MCF 10A (cell line): ENCODE measurements at regions of chr3 and their contacts with region 1.

Region 1: GRCh38 chr3:71652781-71653413 is 69.4 kb upstream of the FOXP1 start:
- DNase-seq: peak; percentile 34
- H3K4me3 Mint-ChIP-seq: no peak overlapping the region
- H3K27ac Mint-ChIP-seq: no peak overlapping the region
- H3K4me1 Mint-ChIP-seq: peaks cover 11% of the 10 kb centered on the region
- H3K27me3 Mint-ChIP-seq: no peaks in the 10 kb centered on the region
- CTCF ChIP-seq: peak; percentile 66

Region 2: DNA sequence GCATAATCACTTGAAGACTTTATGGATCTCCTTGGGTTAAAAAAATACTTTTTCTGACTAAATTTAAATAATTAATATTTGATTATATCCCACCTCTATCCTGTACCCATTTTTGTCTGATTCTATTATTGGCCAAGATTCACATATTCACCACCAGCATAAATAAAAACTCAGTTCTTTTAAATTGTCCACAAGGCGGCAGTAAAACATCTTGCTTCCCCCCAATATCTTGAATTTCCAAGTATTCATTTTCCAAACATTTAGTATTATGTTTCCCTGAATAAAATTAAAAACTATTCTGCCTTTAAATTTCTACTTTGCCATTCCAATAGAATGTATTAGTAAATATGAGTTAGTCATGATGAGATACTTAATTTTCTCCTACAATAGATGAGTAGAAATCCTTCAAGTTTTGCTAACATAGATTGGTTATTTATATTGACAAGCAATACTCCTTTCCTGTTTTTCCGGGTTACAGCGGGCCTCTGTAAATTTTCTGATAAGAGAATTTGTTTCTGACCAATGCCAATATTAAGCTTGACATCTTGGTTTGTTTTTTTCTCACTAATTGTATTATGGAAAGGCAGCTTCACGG is 1121.7 kb before region 1 on chr3:
- CTCF ChIA-PET with region 1: interaction called, 7 read pairs
- POLR2A ChIA-PET with region 1: no interaction called
- intact Hi-C with region 1: loop called (anchors 1 kb)
- DNase-seq: peak; percentile 38
- H3K4me3 Mint-ChIP-seq: no peak overlapping the region
- H3K27ac Mint-ChIP-seq: no peak overlapping the region
- H3K4me1 Mint-ChIP-seq: no peaks in the 10 kb centered on the region
- H3K27me3 Mint-ChIP-seq: peaks cover 98% of the 10 kb centered on the region
- CTCF ChIP-seq: peak; percentile 40

Region 3: DNA sequence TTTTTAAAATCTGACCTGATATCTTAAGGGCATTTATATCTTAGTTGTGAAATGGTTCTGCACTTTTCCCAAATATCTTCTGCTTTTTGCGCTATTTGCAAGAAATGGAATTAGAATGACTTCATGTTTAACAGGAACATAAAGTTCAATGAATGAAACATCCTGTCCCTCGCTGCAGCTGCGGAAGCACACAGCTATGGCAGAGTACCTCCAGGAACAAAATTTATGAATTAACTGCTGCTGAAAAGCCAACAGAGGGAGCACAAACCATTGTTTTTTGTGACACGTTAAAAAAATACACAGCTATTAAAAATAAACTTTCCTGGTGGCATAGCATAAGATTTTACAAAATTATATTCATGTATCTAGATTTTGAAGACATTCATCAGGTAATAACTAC is 936.1 kb before region 1 on chr3:
- CTCF ChIA-PET with region 1: interaction called, 5 read pairs
- POLR2A ChIA-PET with region 1: no interaction called
- intact Hi-C with region 1: loop called (anchors 1 kb)
- DNase-seq: peak; percentile 28
- H3K4me3 Mint-ChIP-seq: no peak overlapping the region
- H3K27ac Mint-ChIP-seq: no peak overlapping the region
- H3K4me1 Mint-ChIP-seq: no peaks in the 10 kb centered on the region
- H3K27me3 Mint-ChIP-seq: peaks cover 77% of the 10 kb centered on the region
- CTCF ChIP-seq: peak; percentile 34

Region 4: DNA sequence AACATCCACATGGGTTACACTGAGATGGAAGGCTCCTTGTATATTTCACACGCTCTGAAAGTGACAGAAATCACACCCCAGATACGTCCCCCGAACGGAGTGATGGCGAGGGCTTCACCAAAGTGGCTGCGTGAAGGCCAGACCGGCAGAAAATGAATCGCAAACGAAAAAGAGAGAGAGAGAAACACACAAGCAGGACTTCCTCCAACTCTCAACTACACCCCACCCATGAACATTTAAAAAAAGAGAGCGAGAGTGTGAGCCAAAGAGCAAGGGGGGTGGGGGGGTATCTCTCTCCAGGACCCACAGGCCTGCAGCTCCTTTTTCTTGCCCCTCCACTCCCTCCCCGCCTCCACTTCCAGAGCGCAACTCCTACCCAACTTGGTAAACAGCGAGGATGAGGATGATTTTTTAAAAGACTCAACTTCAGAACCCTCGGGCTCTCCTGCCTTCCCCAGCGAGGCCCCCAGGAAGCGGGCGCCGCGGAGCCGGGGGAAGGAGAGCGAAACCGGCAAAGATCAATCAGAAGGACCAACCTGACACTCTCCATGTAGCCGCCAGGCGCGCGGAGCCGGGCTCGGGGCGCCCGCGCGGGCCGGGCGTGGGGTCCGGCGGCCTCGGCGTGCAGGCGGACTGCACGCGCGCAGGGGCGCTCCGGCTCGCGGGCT is 588.5 kb before region 1 on chr3:
- CTCF ChIA-PET with region 1: no interaction called
- POLR2A ChIA-PET with region 1: no interaction called
- intact Hi-C with region 1: loop called (anchors 10 kb)
- DNase-seq: peak; percentile 44
- H3K4me3 Mint-ChIP-seq: no peak overlapping the region
- H3K27ac Mint-ChIP-seq: no peak overlapping the region
- H3K4me1 Mint-ChIP-seq: peaks cover 37% of the 10 kb centered on the region
- H3K27me3 Mint-ChIP-seq: no peaks in the 10 kb centered on the region
- CTCF ChIP-seq: no peak

Region 5: GRCh38 chr3:72462595-72463011 is 809.7 kb after region 1 on chr3:
- CTCF ChIA-PET with region 1: no interaction called
- POLR2A ChIA-PET with region 1: no interaction called
- intact Hi-C with region 1: no loop called
- DNase-seq: no peak
- H3K4me3 Mint-ChIP-seq: no peak overlapping the region
- H3K27ac Mint-ChIP-seq: no peak overlapping the region
- H3K4me1 Mint-ChIP-seq: no peaks in the 10 kb centered on the region
- H3K27me3 Mint-ChIP-seq: peaks cover 33% of the 10 kb centered on the region
- CTCF ChIP-seq: no peak

Region 6: GRCh38 chr3:72571638-72572208 is 918.8 kb after region 1 on chr3:
- CTCF ChIA-PET with region 1: no interaction called
- POLR2A ChIA-PET with region 1: no interaction called
- intact Hi-C with region 1: no loop called
- DNase-seq: no peak
- H3K4me3 Mint-ChIP-seq: no peak overlapping the region
- H3K27ac Mint-ChIP-seq: no peak overlapping the region
- H3K4me1 Mint-ChIP-seq: no peaks in the 10 kb centered on the region
- H3K27me3 Mint-ChIP-seq: no peaks in the 10 kb centered on the region
- CTCF ChIP-seq: no peak